Activated B cell treated with CpG ODN at 0.5 μM for 24 hours (primary cell): ENCODE measurements at regions of chr3 and their contacts with region 1.

Region 1: DNA sequence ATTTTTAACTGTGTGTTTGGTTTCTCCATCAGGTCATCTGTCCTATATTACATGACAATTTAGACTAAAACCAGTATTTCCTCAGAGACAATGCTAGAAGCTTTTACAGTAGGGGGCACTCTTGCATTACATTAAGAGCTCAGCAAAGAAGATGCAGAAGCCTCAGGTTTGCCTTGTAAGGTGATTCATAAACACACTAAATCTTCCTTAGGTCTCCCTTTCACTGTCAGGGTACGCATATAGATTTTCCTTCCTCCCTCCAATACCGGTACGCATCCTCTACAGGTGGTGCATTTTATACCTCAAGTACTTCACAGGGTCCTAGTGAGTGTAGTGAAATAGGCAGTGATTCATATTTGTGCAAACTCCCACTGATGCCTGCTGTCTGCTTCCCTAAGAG is 46.5 kb downstream of the CD86 start:
- DNase-seq: no peak
- ATAC-seq: peak; percentile 63
- H3K4me3 Mint-ChIP-seq: no peak overlapping the region
- H3K27ac Mint-ChIP-seq: peak overlapping the region; percentile 51
- H3K4me1 Mint-ChIP-seq: peaks cover 46% of the 10 kb centered on the region
- H3K27me3 Mint-ChIP-seq: no peaks in the 10 kb centered on the region
- CTCF ChIP-seq: no peak

Region 2: DNA sequence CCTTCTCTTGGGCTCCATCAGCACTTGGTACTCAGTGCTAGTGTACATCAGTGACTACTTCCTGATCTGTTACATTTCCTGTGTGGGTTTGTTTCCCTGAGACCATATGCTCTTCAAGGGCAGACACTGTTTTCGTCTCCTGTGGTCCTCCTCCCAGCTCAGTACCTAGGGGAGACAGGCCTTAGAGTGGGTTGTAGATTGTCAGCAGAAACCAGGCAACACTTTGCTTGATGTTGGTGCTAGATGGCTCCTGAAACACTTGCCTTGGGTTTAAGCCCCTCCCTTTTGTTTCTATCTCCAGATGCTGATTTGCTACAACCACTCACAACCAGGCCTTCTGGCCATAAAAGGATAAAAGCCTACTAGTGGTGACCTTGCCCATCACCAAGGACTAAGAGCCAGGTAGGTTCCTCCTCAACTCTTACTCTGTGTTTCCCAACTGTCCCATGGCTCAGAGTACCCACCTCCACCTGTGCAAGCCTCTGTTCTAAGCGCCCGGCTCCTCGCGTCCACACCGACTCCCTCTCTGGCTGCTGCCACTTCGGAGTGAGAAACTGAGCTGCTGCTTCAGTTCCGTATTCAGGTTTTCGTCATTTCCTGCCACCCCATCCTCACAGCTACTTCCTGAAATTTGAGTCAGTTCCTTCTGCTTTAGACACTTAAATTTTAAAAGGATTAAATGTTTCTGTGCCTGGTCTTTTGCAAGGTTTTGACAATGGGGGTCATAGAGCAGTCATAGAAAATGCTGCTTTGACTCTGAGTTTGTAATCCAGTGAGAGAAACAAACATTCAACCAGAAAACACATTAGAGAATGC is 441.1 kb before region 1 on chr3 and contains the start of gene HCLS1:
- CTCF ChIA-PET with region 1: no interaction called
- POLR2A ChIA-PET with region 1: no interaction called
- intact Hi-C with region 1: loop called (anchors 10 kb)
- DNase-seq: peak; percentile 73
- ATAC-seq: peak; percentile 85
- H3K4me3 Mint-ChIP-seq: peak within 1 kb of the TSS; percentile 90
- H3K27ac Mint-ChIP-seq: peak within 1 kb of the TSS; percentile 96
- H3K4me1 Mint-ChIP-seq: peaks cover 55% of the 10 kb centered on the region
- H3K27me3 Mint-ChIP-seq: no peaks in the 10 kb centered on the region
- CTCF ChIP-seq: no peak
- total RNA-seq, gene HCLS1: 434 and 440 TPM in 2 replicates

Region 3: GRCh38 chr3:121803771-121804320 is 297.8 kb before region 1 on chr3:
- CTCF ChIA-PET with region 1: no interaction called
- POLR2A ChIA-PET with region 1: no interaction called
- intact Hi-C with region 1: no loop called
- DNase-seq: no peak
- ATAC-seq: peak; percentile 28
- H3K4me3 Mint-ChIP-seq: peak overlapping the region; percentile 64
- H3K27ac Mint-ChIP-seq: peak overlapping the region; percentile 84
- H3K4me1 Mint-ChIP-seq: peaks cover 66% of the 10 kb centered on the region
- H3K27me3 Mint-ChIP-seq: no peaks in the 10 kb centered on the region
- CTCF ChIP-seq: no peak

Region 4: GRCh38 chr3:121918779-121919483 is 182.7 kb before region 1 on chr3:
- CTCF ChIA-PET with region 1: no interaction called
- POLR2A ChIA-PET with region 1: no interaction called
- intact Hi-C with region 1: no loop called
- DNase-seq: no peak
- ATAC-seq: no peak
- H3K4me3 Mint-ChIP-seq: no peak overlapping the region
- H3K27ac Mint-ChIP-seq: no peak overlapping the region
- H3K4me1 Mint-ChIP-seq: peaks cover 1% of the 10 kb centered on the region
- H3K27me3 Mint-ChIP-seq: no peaks in the 10 kb centered on the region
- CTCF ChIP-seq: no peak

Region 5: GRCh38 chr3:122112754-122113153 is 11.1 kb after region 1 on chr3:
- CTCF ChIA-PET with region 1: interaction called, 12 read pairs
- POLR2A ChIA-PET with region 1: no interaction called
- intact Hi-C with region 1: no loop called
- DNase-seq: no peak
- ATAC-seq: no peak
- H3K4me3 Mint-ChIP-seq: no peak overlapping the region
- H3K27ac Mint-ChIP-seq: no peak overlapping the region
- H3K4me1 Mint-ChIP-seq: peaks cover 9% of the 10 kb centered on the region
- H3K27me3 Mint-ChIP-seq: no peaks in the 10 kb centered on the region
- CTCF ChIP-seq: no peak

Region 6: GRCh38 chr3:122299872-122300460 is 198.3 kb after region 1 on chr3:
- CTCF ChIA-PET with region 1: interaction called, 4 read pairs
- POLR2A ChIA-PET with region 1: no interaction called
- intact Hi-C with region 1: loop called (anchors 2 kb)
- DNase-seq: no peak
- ATAC-seq: no peak
- H3K4me3 Mint-ChIP-seq: no peak overlapping the region
- H3K27ac Mint-ChIP-seq: no peak overlapping the region
- H3K4me1 Mint-ChIP-seq: peaks cover 20% of the 10 kb centered on the region
- H3K27me3 Mint-ChIP-seq: no peaks in the 10 kb centered on the region
- CTCF ChIP-seq: no peak

Region 7: DNA sequence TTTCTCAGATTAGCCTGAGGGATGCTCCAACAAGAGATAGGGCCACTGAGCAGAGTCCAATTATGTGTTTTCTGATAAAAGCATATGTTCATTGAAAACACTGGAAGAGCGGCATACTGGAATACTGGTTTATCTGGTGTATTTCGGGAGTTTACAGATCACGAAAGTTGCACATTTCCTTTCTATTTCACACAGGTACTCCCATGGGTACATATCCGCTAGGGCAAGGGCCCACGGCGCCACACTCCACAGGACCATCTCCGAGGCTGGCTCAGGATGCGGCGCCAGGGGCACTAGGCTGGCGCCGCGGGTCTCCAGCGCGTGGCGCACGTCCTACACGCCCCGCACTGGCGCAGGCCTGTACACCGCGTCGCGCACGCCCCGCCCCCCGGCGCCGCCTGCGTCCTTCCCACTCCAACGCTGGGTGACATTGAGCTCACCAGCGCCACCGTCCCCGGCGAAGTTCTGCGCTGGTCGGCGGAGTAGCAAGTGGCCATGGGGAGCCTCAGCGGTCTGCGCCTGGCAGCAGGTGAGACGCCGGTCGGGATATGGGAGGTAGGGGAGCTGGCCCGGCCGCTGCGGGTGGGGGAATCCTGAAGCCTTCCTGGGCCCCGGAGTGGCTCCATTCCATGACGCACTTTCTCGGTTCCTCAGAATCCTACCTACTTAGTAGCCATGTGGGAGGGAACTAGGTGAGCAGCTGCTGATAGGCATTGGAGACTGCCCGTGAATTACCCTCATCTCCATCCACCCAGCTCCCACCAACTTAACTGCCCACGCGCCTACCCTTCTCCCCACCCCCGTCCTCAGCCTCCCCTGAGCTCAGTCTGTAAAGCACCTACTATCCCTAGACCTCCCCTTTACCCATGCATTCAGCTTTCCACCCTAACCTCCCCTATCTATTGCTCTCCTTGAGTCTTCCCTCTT is 282.4 kb after region 1 on chr3 and contains the start of gene FAM162A:
- CTCF ChIA-PET with region 1: interaction called, 3 read pairs
- POLR2A ChIA-PET with region 1: interaction called, 3 read pairs
- intact Hi-C with region 1: loop called (anchors 1 kb)
- DNase-seq: peak; percentile 93
- ATAC-seq: peak; percentile 94
- H3K4me3 Mint-ChIP-seq: peak within 1 kb of the TSS; percentile 94
- H3K27ac Mint-ChIP-seq: peak within 1 kb of the TSS; percentile 91
- H3K4me1 Mint-ChIP-seq: peaks cover 38% of the 10 kb centered on the region
- H3K27me3 Mint-ChIP-seq: no peaks in the 10 kb centered on the region
- CTCF ChIP-seq: no peak
- total RNA-seq, gene FAM162A: 28.5 and 33.9 TPM in 2 replicates